Activated naive CD4-positive, alpha-beta T cell treated with anti-CD3 and anti-CD28 coated beads for 36 hours (primary cell): ENCODE measurements at regions of chr2 and their contacts with region 1.

Region 1: DNA sequence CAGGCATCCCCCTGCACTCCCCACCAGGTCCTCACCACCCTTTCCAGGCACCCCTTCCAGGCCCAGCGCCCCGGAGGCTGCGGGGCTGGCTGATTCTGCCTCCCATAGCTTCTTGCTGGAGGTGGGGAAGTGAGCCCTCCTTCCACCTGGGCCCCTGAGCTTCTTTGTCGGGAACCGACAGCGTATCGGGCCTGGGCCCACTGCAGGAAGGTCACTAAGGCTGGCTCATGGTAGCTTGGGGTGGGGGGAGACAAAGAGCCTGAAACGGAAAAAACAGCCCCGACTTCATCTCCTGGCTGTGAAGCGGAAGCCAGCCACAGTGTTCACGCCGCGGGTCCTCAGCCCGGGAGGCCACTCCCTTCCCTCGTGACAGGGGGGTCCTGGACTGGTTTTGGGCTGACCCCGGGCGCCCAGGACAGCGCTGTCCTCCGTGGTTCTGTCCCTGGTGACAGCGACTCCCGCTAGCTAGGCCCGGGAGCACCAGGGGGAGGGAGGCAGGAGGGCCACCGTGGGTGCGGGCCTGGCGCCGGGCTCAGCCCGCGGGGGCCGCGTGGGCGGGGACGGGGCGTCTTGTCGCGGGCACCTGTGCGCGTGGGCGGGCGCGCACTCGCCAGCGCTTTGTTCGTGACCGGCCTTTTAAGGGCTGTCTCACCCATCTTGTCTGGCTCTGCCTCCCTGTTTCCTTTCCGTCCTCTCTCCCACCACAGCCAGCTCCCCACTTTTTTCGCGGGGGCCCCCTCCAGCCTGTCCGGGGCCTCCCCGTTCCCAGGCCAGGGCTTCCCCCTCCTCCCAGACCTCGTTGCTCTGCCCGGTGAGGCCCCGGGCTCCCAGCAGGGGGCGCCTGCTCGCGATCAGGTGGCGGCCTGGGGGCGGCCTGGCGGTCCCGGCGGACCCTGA is 64.9 kb downstream of the DNMT3A start:
- DNase-seq: peak; percentile 88
- H3K4me3 Mint-ChIP-seq: peak overlapping the region; percentile 55
- H3K27ac Mint-ChIP-seq: peak overlapping the region; percentile 94
- H3K4me1 Mint-ChIP-seq: peaks cover 83% of the 10 kb centered on the region
- H3K27me3 Mint-ChIP-seq: no peaks in the 10 kb centered on the region

Region 2: DNA sequence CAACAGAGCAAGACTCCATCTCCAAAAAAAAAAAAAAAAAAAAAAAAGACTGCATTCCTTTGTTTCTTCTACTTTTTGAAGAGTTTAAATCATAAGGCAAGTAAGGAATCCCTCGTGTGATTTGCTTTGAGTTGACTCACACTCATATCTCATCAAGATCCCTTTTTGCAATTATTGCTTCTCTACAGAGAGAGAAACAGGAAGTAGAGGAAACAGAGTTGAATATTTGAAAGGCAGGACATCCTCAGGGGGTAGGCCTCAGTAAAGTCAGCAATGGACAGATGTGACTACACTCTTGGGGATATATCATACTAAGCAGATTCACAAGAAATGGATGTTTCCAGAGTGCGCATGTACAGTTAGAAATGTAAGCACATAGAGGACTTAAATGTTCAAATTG is 246.1 kb before region 1 on chr2:
- CTCF ChIA-PET with region 1: no interaction called
- intact Hi-C with region 1: no loop called
- DNase-seq: no peak
- H3K4me3 Mint-ChIP-seq: no peak overlapping the region
- H3K27ac Mint-ChIP-seq: no peak overlapping the region
- H3K4me1 Mint-ChIP-seq: peaks cover 6% of the 10 kb centered on the region
- H3K27me3 Mint-ChIP-seq: no peaks in the 10 kb centered on the region

Region 3: DNA sequence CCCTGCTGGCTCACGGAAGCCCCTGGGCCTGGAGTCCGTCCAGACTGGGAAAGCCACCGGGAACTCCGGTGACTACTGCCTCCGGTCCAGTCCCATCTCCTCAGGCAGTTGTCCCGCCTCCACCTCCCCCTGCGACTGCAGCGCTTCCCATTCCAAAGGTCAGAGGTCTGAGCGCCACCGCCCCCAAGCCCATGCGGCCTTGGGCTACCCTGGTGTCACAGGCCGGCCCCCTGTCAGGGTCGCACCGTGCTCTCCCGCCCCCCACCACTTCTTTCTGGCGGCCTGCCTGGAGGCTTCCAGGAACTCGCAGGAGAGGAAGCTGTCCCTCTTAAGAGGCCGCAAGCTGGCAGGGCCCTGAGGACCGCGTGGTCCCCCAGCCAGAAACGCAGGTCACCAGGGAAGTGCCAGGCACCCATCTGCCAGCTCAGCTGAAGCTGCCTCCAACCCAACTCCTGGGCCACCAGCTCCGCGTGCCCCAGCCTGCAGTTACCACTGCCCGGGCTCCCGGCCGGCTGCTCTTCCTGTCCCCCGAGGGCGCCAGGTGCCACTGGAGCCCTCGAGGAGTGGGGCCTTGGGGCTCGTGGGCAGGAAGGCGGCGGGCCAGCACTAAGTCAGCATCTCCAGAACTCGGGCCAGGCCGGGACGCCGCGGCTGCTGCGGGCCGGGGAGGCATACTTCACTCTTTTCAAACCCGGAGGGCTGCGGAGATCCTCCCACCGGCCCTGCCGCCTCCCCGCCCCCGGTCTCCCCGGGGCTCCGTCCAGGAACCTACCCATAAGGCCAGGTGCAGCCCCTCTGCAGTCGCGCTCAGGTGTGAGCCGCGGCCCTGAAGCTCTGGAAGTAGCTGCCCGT is 25.2 kb before region 1 on chr2:
- CTCF ChIA-PET with region 1: interaction called, 10 read pairs
- intact Hi-C with region 1: loop called (anchors 1 kb)
- DNase-seq: peak; percentile 45
- H3K4me3 Mint-ChIP-seq: peak overlapping the region; percentile 81
- H3K27ac Mint-ChIP-seq: peak overlapping the region; percentile 85
- H3K4me1 Mint-ChIP-seq: peaks cover 18% of the 10 kb centered on the region
- H3K27me3 Mint-ChIP-seq: no peaks in the 10 kb centered on the region

Region 4: GRCh38 chr2:25294573-25295462 is 18.0 kb after region 1 on chr2:
- CTCF ChIA-PET with region 1: interaction called, 55 read pairs
- intact Hi-C with region 1: loop called (anchors 1 kb)
- DNase-seq: peak; percentile 89
- H3K4me3 Mint-ChIP-seq: peak overlapping the region; percentile 68
- H3K27ac Mint-ChIP-seq: peak overlapping the region; percentile 90
- H3K4me1 Mint-ChIP-seq: peaks cover 60% of the 10 kb centered on the region
- H3K27me3 Mint-ChIP-seq: no peaks in the 10 kb centered on the region

Region 5: GRCh38 chr2:25301453-25302352 is 24.9 kb after region 1 on chr2:
- CTCF ChIA-PET with region 1: interaction called, 55 read pairs
- intact Hi-C with region 1: loop called (anchors 1 kb)
- DNase-seq: peak; percentile 89
- H3K4me3 Mint-ChIP-seq: no peak overlapping the region
- H3K27ac Mint-ChIP-seq: peak overlapping the region; percentile 25
- H3K4me1 Mint-ChIP-seq: peaks cover 66% of the 10 kb centered on the region
- H3K27me3 Mint-ChIP-seq: no peaks in the 10 kb centered on the region

Region 6: GRCh38 chr2:25420820-25421237 is 144.0 kb after region 1 on chr2:
- CTCF ChIA-PET with region 1: no interaction called
- intact Hi-C with region 1: no loop called
- DNase-seq: no peak
- H3K4me3 Mint-ChIP-seq: no peak overlapping the region
- H3K27ac Mint-ChIP-seq: no peak overlapping the region
- H3K4me1 Mint-ChIP-seq: peaks cover 5% of the 10 kb centered on the region
- H3K27me3 Mint-ChIP-seq: no peaks in the 10 kb centered on the region

Region 7: DNA sequence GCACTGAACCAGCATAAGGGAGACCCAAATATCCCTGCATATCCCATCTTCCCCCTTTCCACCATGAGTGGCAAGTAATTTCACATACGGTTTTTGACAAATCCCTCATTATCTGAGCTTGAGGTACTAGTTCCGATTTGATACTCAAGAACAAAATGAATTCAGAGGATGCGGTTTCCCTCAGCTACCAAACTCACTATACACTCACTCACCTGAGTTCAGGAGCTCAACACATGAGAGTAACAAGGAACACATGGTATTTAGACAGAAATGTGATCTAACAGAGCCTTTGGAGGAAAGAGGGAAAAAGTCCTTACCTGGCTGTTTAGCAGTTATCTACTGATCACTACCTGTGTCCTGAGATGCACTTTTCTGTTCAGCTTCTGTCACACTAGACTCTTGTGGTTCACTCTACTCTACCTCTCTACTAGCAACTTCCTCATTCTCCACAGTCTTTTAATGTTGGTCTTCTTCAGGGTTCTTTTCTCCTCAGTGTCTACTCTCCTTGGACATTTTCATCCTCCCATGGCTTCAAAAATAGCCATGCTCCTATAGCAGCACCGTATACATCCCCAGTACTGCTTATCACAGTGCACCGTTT is 576.3 kb after region 1 on chr2:
- CTCF ChIA-PET with region 1: no interaction called
- intact Hi-C with region 1: no loop called
- DNase-seq: no peak
- H3K4me3 Mint-ChIP-seq: no peak overlapping the region
- H3K27ac Mint-ChIP-seq: no peak overlapping the region
- H3K4me1 Mint-ChIP-seq: peaks cover 39% of the 10 kb centered on the region
- H3K27me3 Mint-ChIP-seq: no peaks in the 10 kb centered on the region